Activated B cell treated with CpG ODN at 0.5 μM for 24 hours (primary cell): ENCODE measurements at regions of chr2 and their contacts with region 1.

Region 1: GRCh38 chr2:237674731-237675276 is 47.4 kb downstream of the LRRFIP1 start:
- DNase-seq: peak; percentile 80
- ATAC-seq: peak; percentile 77
- H3K4me3 Mint-ChIP-seq: peak overlapping the region; percentile 90
- H3K27ac Mint-ChIP-seq: peak overlapping the region; percentile 99
- H3K4me1 Mint-ChIP-seq: peaks cover 90% of the 10 kb centered on the region
- H3K27me3 Mint-ChIP-seq: no peaks in the 10 kb centered on the region
- CTCF ChIP-seq: no peak

Region 2: DNA sequence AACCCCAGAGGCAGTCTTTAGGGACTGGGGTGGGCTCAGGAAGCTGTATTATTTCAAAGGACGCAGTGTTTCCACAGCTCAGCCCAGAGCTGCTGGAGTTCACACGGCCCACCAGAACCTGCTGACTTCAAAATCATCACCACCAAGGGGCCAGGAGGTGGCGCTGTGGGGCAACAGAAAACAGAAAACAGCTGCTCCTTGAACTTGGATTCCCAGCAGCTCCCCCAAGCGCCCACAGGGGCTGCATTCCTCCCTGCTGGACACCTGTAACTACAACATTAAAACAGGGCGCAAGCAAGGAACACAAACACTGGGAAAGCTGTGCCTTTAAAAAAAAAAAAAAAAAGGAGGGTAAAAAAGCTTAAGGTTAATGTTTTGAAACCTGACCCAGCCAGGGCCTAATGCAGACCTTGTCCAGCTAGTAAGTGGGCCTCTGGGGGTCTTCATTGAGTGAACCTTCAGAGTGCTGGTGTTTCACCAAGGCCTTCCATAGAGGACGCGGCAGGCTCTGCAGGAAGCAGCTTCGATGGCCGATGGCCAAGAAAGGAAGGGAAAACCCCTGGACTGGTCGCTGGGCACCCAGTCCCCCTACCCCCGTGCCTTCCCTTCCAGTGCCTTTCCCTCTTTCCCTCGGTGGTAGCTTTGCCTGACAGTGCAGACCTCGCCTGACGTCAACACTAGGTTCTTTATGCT is 161.9 kb before region 1 on chr2:
- CTCF ChIA-PET with region 1: interaction called, 15 read pairs
- POLR2A ChIA-PET with region 1: no interaction called
- intact Hi-C with region 1: loop called (anchors 2 kb)
- DNase-seq: peak; percentile 58
- ATAC-seq: peak; percentile 64
- H3K4me3 Mint-ChIP-seq: no peak overlapping the region
- H3K27ac Mint-ChIP-seq: no peak overlapping the region
- H3K4me1 Mint-ChIP-seq: no peaks in the 10 kb centered on the region
- H3K27me3 Mint-ChIP-seq: peaks cover 5% of the 10 kb centered on the region
- CTCF ChIP-seq: no peak

Region 3: GRCh38 chr2:237686659-237687136 is 11.9 kb after region 1 on chr2:
- CTCF ChIA-PET with region 1: interaction called, 125 read pairs
- POLR2A ChIA-PET with region 1: interaction called, 241 read pairs
- intact Hi-C with region 1: loop called (anchors 1 kb)
- DNase-seq: no peak
- ATAC-seq: no peak
- H3K4me3 Mint-ChIP-seq: no peak overlapping the region
- H3K27ac Mint-ChIP-seq: peak overlapping the region; percentile 96
- H3K4me1 Mint-ChIP-seq: peaks cover 53% of the 10 kb centered on the region
- H3K27me3 Mint-ChIP-seq: no peaks in the 10 kb centered on the region
- CTCF ChIP-seq: no peak

Region 4: DNA sequence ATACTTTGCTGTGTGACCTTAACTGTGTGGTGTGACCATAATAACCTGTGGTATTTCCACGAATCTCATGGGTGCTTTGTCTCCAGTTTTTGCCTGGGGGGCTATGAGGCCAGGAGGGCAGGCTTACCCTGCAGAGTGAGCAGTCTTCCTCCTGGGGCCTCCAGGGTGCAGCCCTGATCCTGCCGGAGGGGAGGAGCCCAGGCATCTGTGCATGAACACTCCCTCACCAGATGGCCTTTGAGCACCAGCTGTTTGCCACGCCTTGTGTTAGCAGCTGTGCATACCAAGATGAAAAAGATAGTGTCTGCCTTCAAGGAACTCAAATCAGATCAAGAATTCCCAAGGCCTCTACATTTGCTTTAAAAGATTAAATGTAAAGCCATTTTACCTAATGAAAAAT is 48.8 kb after region 1 on chr2:
- CTCF ChIA-PET with region 1: interaction called, 7 read pairs
- POLR2A ChIA-PET with region 1: interaction called, 3 read pairs
- intact Hi-C with region 1: loop called (anchors 1 kb)
- DNase-seq: no peak
- ATAC-seq: peak; percentile 45
- H3K4me3 Mint-ChIP-seq: no peak overlapping the region
- H3K27ac Mint-ChIP-seq: no peak overlapping the region
- H3K4me1 Mint-ChIP-seq: peaks cover 44% of the 10 kb centered on the region
- H3K27me3 Mint-ChIP-seq: no peaks in the 10 kb centered on the region
- CTCF ChIP-seq: no peak

Region 5: DNA sequence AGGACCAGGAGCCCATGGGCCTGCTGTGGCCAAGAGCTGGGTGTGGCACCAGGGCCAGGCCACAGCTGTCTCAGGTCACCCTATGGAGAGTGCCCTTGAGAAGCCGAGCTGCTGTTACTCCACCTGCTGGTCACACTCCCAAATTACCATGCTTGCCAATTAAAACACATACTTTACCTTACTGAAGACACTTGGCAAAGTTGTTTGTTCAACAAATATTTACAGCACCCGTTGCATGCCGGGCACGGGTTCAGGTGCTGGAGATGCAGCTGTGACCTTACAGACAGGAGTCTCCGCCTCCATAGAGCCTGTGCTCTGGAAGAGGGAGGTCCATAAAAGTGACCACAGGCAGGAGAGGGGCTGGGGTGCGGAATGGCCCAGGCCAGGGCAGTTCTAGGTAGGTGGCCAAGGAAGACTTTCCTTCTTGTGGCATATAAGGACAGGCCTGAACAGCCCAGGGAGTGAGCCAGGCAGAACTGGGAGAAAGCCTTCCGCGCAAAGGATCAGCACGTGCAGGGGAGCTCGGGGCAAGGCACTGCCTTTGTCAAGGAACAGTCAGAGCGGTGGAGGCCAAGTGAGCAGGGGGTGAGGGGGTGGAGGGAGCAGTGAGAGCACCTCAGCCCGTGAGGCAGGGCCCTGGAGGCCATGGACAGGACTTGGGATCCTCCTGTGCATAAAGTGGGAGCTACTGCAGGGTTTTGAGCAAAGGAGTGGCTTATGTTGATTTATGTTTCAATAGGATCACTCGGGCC is 100.2 kb after region 1 on chr2:
- CTCF ChIA-PET with region 1: interaction called, 16 read pairs
- POLR2A ChIA-PET with region 1: no interaction called
- intact Hi-C with region 1: loop called (anchors 1 kb)
- DNase-seq: no peak
- ATAC-seq: peak; percentile 77
- H3K4me3 Mint-ChIP-seq: no peak overlapping the region
- H3K27ac Mint-ChIP-seq: no peak overlapping the region
- H3K4me1 Mint-ChIP-seq: no peaks in the 10 kb centered on the region
- H3K27me3 Mint-ChIP-seq: no peaks in the 10 kb centered on the region
- CTCF ChIP-seq: peak; percentile 48

Region 6: GRCh38 chr2:237791977-237792727 is 117.3 kb after region 1 on chr2:
- CTCF ChIA-PET with region 1: no interaction called
- POLR2A ChIA-PET with region 1: no interaction called
- intact Hi-C with region 1: no loop called
- DNase-seq: no peak
- ATAC-seq: no peak
- H3K4me3 Mint-ChIP-seq: no peak overlapping the region
- H3K27ac Mint-ChIP-seq: no peak overlapping the region
- H3K4me1 Mint-ChIP-seq: no peaks in the 10 kb centered on the region
- H3K27me3 Mint-ChIP-seq: no peaks in the 10 kb centered on the region
- CTCF ChIP-seq: no peak

Region 7: GRCh38 chr2:238106686-238107524 is 432.1 kb after region 1 on chr2:
- CTCF ChIA-PET with region 1: no interaction called
- POLR2A ChIA-PET with region 1: no interaction called
- intact Hi-C with region 1: loop called (anchors 5 kb)
- DNase-seq: peak; percentile 15
- ATAC-seq: no peak
- H3K4me3 Mint-ChIP-seq: peak overlapping the region; percentile 88
- H3K27ac Mint-ChIP-seq: peak overlapping the region; percentile 86
- H3K4me1 Mint-ChIP-seq: peaks cover 35% of the 10 kb centered on the region
- H3K27me3 Mint-ChIP-seq: no peaks in the 10 kb centered on the region
- CTCF ChIP-seq: no peak

Region 8: DNA sequence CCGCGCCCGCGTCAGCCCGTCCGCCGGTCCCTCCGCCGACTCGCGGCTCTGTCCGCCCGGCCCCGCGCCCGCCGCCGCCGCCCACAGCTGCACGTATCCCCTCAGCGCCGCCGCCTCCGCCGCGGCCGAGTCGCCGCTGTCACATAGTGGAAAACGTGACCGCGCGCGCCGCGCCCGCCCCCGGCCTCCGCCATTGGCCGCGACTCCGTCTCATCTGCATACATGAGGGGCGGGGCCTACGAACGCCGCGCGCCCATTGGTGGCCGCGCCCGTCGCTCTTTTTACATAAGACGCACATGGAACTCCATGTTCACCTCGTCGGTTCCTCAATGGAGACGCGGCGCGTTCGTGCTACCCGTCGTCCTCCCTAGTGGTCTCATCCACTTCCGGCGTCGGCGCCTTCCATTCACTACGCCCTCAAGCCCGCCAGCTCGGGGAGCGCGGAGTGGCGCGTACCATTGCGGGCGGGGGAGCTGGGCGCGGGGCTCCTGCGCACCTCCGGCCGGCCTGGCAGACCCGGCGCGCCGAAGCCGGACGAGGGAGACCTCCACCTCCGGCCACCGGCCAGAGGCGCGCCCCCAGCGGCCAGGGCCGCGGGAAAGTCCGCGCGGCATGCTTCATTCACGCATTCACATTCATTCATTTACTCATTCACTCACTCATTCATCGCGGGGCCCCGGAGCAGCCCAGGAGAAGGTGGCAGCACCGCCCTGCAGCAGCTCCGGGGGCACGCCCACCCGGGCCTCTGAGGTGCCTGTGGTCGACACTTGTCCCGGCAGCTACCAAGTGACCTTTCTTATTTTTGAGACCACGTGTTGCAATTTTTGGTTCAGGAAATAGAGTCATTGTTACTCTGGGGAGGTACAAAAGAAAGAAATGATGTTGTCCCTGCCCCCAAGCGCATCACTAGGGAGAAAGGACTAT is 614.1 kb after region 1 on chr2:
- CTCF ChIA-PET with region 1: no interaction called
- POLR2A ChIA-PET with region 1: no interaction called
- intact Hi-C with region 1: loop called (anchors 5 kb)
- DNase-seq: peak; percentile 95
- ATAC-seq: peak; percentile 87
- H3K4me3 Mint-ChIP-seq: peak overlapping the region; percentile 93
- H3K27ac Mint-ChIP-seq: peak overlapping the region; percentile 94
- H3K4me1 Mint-ChIP-seq: peaks cover 34% of the 10 kb centered on the region
- H3K27me3 Mint-ChIP-seq: no peaks in the 10 kb centered on the region
- CTCF ChIP-seq: no peak